Right lobe of liver (tissue), 6 donors: ENCODE measurements at regions of chr4 and their contacts with region 1.

Region 1: GRCh38 chr4:155953151-155954114 is at the start of gene CTSO:
- DNase-seq: peak; percentile 73 to 80 (median 80)
- ATAC-seq: peak; percentile 79 to 87 (median 85)
- H3K4me3 ChIP-seq: peak within 1 kb of the TSS; percentile 64 to 77 (median 76)
- H3K27ac ChIP-seq: peak within 1 kb of the TSS; percentile 99 to 100 (median 99)
- H3K4me1 ChIP-seq: peaks cover 0 to 20% (median 2%) of the 10 kb centered on the region in 4 donors
- H3K27me3 ChIP-seq: no peaks in the 10 kb centered on the region
- CTCF ChIP-seq: peak; percentile 48 to 60 (median 58)
- POLR2A ChIP-seq: peak; percentile 87
- total RNA-seq, gene CTSO: 23.8 to 44.7 (median 26.1) TPM

Region 2: DNA sequence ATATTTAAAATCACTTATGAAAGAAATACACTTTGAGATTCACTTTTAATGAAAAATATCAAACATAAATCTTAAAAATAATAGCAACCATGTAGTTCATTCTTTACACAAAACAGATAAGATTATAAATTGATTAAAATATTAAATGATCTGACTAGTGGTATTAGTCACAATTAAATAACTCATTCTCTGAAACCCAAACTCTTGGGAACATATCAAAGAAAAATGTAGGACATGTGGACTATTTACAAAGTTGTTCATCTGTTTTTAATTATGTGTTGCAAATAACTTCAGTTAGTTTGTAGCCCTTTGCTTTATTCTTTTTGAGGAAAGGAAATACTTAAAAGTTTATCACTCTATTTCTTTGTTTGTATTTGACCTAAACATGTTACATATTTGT is 296.3 kb before region 1 on chr4:
- intact Hi-C with region 1: no loop called
- DNase-seq: no peak
- ATAC-seq: no peak
- H3K4me3 ChIP-seq: no peak overlapping the region
- H3K27ac ChIP-seq: no peak overlapping the region
- H3K4me1 ChIP-seq: no peaks in the 10 kb centered on the region
- H3K27me3 ChIP-seq: no peaks in the 10 kb centered on the region
- CTCF ChIP-seq: no peak
- POLR2A ChIP-seq: no peak

Region 3: DNA sequence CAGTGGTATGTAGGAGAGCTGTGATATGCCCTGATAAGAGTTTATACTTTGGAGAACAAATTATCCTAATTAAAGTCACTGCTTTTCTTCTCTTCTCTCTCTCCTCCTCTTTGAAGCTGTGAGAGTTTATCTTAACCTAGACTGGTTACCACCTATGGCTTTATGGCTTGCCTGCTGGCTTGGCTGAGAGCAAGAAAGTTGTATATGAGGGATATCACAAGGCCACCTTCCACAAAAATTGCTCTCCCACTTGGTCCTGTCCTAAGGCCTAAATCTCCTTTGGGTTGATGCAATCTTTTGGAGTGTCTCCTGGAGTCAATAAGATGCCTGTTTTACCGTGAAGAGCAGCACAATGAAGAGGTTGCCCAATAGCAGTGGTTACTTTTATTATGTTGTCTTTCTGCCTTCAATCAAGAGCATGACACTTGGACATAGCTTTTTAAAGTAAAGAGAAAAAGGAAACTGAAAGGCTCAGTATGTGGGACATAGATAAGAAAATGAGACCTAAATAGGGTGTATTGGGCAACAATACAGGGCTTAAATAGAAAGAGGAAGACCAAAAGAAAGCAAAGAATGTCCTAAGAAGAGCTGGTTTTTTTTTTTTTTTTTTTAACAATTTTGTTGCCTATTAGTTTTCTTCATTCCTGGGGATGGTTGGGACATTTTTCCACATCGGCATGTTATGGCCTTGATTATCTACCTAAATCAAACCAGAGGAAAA is 277.6 kb before region 1 on chr4:
- intact Hi-C with region 1: no loop called
- DNase-seq: no peak
- ATAC-seq: peak; percentile 30 to 78 (median 60)
- H3K4me3 ChIP-seq: no peak overlapping the region
- H3K27ac ChIP-seq: peak overlapping the region in 1 of 3 donors; percentile 39
- H3K4me1 ChIP-seq: no peaks in the 10 kb centered on the region
- H3K27me3 ChIP-seq: no peaks in the 10 kb centered on the region
- CTCF ChIP-seq: no peak
- POLR2A ChIP-seq: no peak

Region 4: DNA sequence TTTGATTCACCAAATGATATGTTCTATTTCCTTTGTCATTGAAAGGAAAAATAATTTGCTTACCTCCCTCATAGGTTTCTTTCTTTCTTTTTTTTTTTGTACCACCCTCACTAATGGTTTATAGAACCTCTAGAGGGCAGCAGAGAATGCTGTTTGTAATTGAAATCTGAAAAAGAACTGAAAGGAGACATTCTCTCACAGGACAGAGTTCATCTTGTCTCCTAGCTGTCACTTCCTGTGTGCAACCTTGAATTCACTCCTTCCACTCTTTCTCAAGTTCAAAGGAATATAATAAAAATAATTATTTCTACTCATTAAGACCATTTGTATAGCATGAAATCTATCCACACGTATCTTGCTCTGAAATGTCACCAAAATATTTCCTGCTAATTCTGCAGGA is 143.6 kb before region 1 on chr4:
- intact Hi-C with region 1: loop called in 1 of 2 experiments (anchors 10 kb)
- DNase-seq: no peak
- ATAC-seq: peak; percentile 97 to 99 (median 98)
- H3K4me3 ChIP-seq: no peak overlapping the region
- H3K27ac ChIP-seq: peak overlapping the region in 2 of 3 donors; percentile 33 to 37
- H3K4me1 ChIP-seq: peaks cover 0 to 27% (median 2%) of the 10 kb centered on the region in 4 donors
- H3K27me3 ChIP-seq: no peaks in the 10 kb centered on the region
- CTCF ChIP-seq: peak; percentile 77 to 83 (median 82)
- POLR2A ChIP-seq: no peak

Region 5: DNA sequence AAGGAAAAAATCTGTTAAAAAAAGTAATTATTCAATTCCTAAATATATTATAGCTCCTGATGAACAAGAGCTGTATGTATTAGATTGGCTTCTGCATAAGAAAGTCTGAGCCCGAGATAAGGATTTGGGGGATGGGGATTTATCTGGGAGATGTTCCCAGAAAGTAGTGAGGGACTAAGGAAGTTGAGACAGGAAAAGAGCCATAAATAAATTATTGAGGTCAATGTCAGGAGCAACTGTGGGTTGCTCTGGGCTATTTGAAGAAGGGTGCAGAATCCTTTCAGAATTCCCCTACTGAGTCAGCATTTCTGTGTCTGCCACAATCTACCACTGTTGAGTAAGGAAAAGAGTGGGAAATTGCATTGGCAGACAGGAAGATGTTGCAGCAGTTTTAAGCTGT is 53.1 kb before region 1 on chr4:
- intact Hi-C with region 1: no loop called
- DNase-seq: no peak
- ATAC-seq: peak in 3 of 4 donors; percentile 30 to 64 (median 38)
- H3K4me3 ChIP-seq: no peak overlapping the region
- H3K27ac ChIP-seq: peak overlapping the region in 1 of 3 donors; percentile 16
- H3K4me1 ChIP-seq: peaks cover 0 to 24% (median 2%) of the 10 kb centered on the region in 4 donors
- H3K27me3 ChIP-seq: no peaks in the 10 kb centered on the region
- CTCF ChIP-seq: no peak
- POLR2A ChIP-seq: no peak